H1 (cell line): ENCODE measurements at regions of chr2 and their contacts with region 1.

Region 1: DNA sequence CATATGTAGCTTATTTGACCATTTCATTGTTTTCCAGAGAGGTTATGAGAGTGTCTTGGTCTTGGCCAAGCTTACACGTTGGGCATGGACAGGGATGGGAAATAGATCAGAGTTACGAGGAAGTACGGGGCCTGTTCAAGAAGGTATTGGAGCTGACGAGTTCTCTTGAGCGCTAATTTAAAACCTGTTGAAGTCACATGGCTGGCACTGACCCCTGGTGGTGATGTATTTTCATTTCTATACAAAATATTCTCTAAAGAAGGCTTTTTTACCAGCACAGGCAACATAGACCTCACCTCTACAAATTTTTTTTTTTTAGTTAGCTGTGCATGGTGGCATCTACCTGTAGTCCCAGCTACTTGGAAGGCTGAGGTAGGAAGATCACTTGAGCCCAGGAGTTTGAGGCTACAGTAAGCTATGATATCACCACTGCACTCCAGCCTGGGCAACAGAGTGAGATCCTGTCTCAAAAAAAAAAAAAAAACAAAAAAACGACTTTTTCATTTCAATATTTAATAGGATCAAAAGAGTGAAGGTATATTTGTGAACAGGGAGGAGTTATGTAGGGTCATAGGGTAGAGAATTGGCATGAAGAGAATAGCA is 19.6 kb downstream of the UGP2 start:
- DNase-seq: no peak
- H3K4me3 ChIP-seq: no peak overlapping the region
- H3K27ac ChIP-seq: no peak overlapping the region
- H3K4me1 ChIP-seq: peaks cover 0 to 22% (median 6%) of the 10 kb centered on the region in 4 experiments; a peak in 4 of 7 replicates
- H3K27me3 ChIP-seq: no peaks in the 10 kb centered on the region
- CTCF ChIP-seq: peak in 2 of 3 experiments; percentile 37; a peak in 2 of 4 replicates
- EP300 ChIP-seq: no peak
- POLR2A ChIP-seq: no peak
- RAD21 ChIP-seq: peak; percentile 69 to 71

Region 2: DNA sequence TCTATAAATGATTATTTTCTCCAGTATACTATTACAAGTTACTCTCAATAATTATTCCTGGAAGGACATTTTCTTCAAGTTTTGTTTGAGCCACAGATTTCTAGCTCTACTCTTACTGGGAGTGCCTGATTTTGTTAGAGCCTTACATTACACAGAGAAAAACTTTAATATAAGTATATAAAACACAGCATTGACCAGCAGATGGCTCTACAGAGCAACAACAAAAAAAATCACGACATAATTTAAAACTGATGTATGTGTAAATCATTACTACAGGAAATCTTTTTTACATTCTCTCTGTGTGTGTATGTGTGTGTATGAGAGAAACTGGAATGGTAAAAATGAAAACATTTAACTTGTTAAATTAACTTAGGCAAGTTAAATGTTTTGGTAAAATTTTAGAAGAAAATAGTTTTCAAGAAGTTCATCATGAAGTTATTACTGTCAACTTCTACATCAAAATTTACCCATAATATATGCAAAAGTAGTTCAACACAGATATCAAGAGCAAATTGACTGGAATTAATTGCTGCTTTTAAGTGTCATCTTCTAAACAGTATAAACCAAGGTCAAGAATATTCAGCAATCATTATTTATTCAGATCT is 169.2 kb before region 1 on chr2:
- CTCF ChIA-PET with region 1: interaction called, 20 read pairs
- POLR2A ChIA-PET with region 1: no interaction called
- DNase-seq: no peak
- H3K4me3 ChIP-seq: no peak overlapping the region
- H3K27ac ChIP-seq: no peak overlapping the region
- H3K4me1 ChIP-seq: peaks cover 0 to 3% (median 0%) of the 10 kb centered on the region in 4 experiments; a peak in 2 of 7 replicates
- H3K27me3 ChIP-seq: no peaks in the 10 kb centered on the region
- CTCF ChIP-seq: peak in 2 of 3 experiments; percentile 18 to 31; a peak in 2 of 4 replicates
- EP300 ChIP-seq: no peak
- POLR2A ChIP-seq: no peak
- RAD21 ChIP-seq: peak; percentile 46 to 61

Region 3: GRCh38 chr2:63849381-63850203 is 11.7 kb before region 1 on chr2:
- CTCF ChIA-PET with region 1: interaction called, 16 read pairs
- POLR2A ChIA-PET with region 1: interaction called, 297 read pairs
- DNase-seq: peak in 1 of 2 experiments; percentile 58
- H3K4me3 ChIP-seq: peak overlapping the region in 3 of 4 experiments; percentile 14 to 60 (median 33); a peak in 5 of 8 replicates
- H3K27ac ChIP-seq: peak overlapping the region; percentile 76
- H3K4me1 ChIP-seq: peaks cover 18 to 60% (median 26%) of the 10 kb centered on the region in 4 experiments
- H3K27me3 ChIP-seq: no peaks in the 10 kb centered on the region
- CTCF ChIP-seq: no peak
- EP300 ChIP-seq: no peak
- POLR2A ChIP-seq: peak; percentile 25 to 79
- RAD21 ChIP-seq: no peak; a peak in 1 of 4 replicates

Region 4: DNA sequence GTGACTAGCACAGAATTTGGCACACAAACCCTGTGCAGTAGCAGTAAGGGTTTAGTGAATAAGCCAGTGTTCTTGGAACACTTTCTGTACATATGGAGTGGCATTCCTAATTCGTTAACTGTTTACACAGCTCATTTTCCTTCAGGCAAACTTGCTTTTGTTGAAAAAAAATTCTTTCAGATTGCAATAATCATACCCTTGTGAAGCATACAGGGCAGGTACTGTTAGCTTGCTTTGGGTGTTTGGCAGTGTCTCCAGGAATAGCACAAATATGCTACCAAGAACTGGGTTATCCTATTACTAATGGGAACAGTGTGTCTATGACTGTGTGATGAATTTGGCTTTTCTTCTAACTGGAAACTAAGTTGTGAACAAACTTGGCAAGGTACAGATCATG is 13.8 kb after region 1 on chr2:
- CTCF ChIA-PET with region 1: interaction called, 3 read pairs
- POLR2A ChIA-PET with region 1: interaction called, 45 read pairs
- DNase-seq: no peak
- H3K4me3 ChIP-seq: no peak overlapping the region
- H3K27ac ChIP-seq: no peak overlapping the region
- H3K4me1 ChIP-seq: peaks cover 0 to 19% (median 7%) of the 10 kb centered on the region in 4 experiments; a peak in 4 of 7 replicates
- H3K27me3 ChIP-seq: no peaks in the 10 kb centered on the region
- CTCF ChIP-seq: no peak
- EP300 ChIP-seq: no peak
- POLR2A ChIP-seq: peak; percentile 11 to 76; a peak in 1 of 3 replicates
- RAD21 ChIP-seq: no peak